PC-9 (cell line): ENCODE measurements at regions of chr9 and their contacts with region 1.

Region 1: DNA sequence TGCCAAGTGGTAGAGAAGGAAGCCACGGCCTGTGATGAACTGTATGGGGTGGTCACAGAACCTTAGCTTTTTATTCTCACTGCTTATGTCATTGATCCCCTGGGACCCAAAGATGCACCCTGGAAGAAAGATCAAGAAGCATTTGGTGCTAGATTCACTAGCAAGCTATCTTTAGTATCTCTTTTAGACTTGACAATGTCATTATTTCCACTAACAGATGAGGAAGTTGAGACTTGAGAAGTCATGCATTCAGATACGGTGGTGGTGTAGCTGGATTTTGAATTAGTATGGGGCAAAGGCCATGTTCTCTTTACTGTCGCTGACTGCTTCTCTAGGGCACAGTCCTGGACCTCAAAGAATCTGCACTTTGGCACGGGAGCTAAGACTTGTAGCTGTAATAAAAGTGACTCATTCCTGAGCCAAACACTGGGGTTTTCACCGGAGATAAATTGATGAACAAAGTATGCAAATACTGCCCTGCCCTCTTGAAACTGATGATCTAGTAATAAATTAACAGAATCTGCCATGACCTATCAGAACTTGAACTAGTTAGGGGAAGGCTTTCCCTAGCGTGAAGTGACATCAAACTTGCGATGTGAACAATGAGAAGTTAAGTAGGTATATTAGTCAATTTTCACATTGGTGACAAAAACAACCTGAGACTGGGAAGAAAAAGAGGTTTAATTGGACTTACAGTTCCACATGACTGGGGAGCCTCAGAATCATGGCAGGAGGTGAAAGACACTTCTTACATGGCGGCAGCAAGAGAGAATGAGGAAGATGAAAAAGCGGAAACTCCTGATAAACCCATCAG is 5.4 kb downstream of the GDA start:
- DNase-seq: peak in 1 of 2 experiments; percentile 80
- H3K4me3 ChIP-seq: no peak overlapping the region
- H3K27ac ChIP-seq: peak overlapping the region; percentile 58
- H3K4me1 ChIP-seq: peaks cover 45% of the 10 kb centered on the region
- H3K27me3 ChIP-seq: no peaks in the 10 kb centered on the region
- CTCF ChIP-seq: no peak

Region 2: GRCh38 chr9:72203205-72203803 is 48.6 kb after region 1 on chr9:
- CTCF ChIA-PET with region 1: no interaction called
- POLR2A ChIA-PET with region 1: no interaction called
- intact Hi-C with region 1: loop called (anchors 5 kb)
- DNase-seq: peak in 1 of 2 experiments; percentile 15
- H3K4me3 ChIP-seq: no peak overlapping the region
- H3K27ac ChIP-seq: no peak overlapping the region
- H3K4me1 ChIP-seq: no peaks in the 10 kb centered on the region
- H3K27me3 ChIP-seq: no peaks in the 10 kb centered on the region
- CTCF ChIP-seq: peak; percentile 65

Region 3: DNA sequence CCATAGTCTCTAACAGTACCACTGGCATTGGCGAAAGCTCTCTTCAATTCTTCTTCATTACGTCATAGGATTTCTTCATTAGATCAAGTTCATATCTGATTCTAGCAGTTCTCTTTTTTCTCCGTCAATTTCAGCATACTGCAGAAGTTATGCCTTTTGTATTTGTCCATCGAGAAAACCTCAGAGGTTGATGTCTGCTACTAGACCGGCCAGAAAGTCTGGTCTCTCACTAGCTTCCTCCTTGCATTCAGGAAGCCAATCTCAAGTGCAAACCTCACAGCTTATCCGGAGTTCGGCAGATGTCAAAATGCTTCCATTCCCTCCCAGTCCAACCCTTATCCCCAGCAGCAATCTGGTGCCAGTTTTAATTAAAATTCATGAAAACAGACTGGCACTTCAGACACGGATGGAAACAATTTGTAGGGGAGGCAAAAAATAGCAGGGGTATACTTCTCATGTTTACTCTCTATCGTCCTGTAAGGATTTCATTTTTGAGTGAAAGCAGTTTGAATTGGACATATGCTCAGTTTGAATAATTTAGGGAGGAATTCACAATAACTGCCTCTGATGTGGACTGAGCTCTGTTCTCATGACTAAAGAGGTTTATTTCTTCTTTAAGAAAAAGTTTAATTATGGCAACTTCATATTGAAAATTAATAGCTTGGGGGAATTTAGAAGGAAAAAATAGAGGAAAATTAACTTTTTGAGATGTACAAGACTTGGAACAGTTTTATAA is 310.4 kb after region 1 on chr9:
- CTCF ChIA-PET with region 1: no interaction called
- POLR2A ChIA-PET with region 1: no interaction called
- intact Hi-C with region 1: no loop called
- DNase-seq: no peak
- H3K4me3 ChIP-seq: no peak overlapping the region
- H3K27ac ChIP-seq: no peak overlapping the region
- H3K4me1 ChIP-seq: no peaks in the 10 kb centered on the region
- H3K27me3 ChIP-seq: no peaks in the 10 kb centered on the region
- CTCF ChIP-seq: no peak